Calu3 (cell line): ENCODE measurements at regions of chr10 and their contacts with region 1.

Region 1: GRCh38 chr10:4849555-4850242 is 23.7 kb downstream of the AKR1E2 start:
- DNase-seq: peak; percentile 94
- H3K4me3 Mint-ChIP-seq: no peak overlapping the region
- H3K27ac Mint-ChIP-seq: peak overlapping the region; percentile 72
- H3K4me1 Mint-ChIP-seq: peaks cover 61% of the 10 kb centered on the region
- H3K27me3 Mint-ChIP-seq: no peaks in the 10 kb centered on the region
- CTCF ChIP-seq: peak; percentile 98

Region 2: GRCh38 chr10:4512671-4513240 is 336.9 kb before region 1 on chr10:
- CTCF ChIA-PET with region 1: no interaction called
- intact Hi-C with region 1: no loop called
- DNase-seq: peak; percentile 59
- H3K4me3 Mint-ChIP-seq: no peak overlapping the region
- H3K27ac Mint-ChIP-seq: no peak overlapping the region
- H3K4me1 Mint-ChIP-seq: peaks cover 24% of the 10 kb centered on the region
- H3K27me3 Mint-ChIP-seq: no peaks in the 10 kb centered on the region
- CTCF ChIP-seq: peak; percentile 62

Region 3: DNA sequence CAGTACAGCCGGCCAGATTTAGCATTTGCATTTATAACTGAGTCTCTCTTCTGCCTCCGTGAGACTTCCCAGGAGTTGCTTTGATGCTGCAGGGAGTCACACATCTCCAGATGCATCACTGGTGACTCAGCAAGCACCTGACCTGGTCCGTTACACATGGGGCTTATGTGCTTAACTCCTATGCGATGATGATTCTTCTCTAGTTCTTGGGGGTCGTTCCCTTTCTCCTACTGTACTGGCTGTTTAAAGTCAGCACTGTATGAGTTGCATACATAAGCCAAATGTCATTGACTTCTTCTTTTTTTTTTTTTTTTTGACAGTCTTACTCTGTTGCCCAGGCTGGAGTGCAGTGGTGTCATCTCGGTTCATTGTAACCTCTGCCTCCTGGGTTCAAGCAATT is 36.7 kb before region 1 on chr10:
- CTCF ChIA-PET with region 1: interaction called, 16 read pairs
- intact Hi-C with region 1: loop called (anchors 1 kb)
- DNase-seq: peak; percentile 21
- H3K4me3 Mint-ChIP-seq: no peak overlapping the region
- H3K27ac Mint-ChIP-seq: no peak overlapping the region
- H3K4me1 Mint-ChIP-seq: peaks cover 34% of the 10 kb centered on the region
- H3K27me3 Mint-ChIP-seq: no peaks in the 10 kb centered on the region
- CTCF ChIP-seq: no peak

Region 4: DNA sequence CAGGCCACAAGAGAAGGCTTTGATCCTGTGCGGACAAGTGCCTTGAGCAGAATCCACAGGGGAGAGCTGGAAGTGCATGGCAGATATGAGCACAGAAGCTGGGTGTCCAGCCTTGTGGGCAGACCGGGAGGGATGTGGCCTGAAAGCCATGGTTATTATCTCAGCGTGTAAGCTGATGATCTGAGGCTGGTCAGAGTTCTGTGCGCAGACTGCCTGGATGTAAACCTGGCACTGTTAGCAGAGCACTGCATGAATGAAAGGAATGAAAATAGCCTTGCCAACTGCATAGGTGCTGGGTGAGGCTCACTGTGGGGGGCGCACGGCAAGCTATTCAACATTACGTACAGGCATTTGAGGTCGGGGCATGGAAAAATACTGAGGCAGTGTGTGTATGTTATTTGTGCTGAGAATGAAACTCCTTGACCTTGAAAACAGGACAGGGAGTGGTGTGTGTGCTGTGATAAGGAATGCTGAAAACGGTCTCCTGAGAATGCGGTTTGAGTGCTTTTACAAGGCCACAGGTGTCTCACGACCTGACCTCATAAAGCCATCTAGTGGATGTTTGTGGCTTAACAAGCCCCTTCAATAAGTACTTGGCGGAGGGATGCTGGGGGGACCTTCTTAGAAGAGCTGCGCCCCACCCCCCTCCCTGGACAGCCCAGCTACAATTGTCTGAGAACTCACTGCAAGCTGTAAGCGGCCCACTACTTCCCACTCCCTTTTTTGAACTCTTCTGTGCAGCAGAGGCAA is 132.2 kb after region 1 on chr10:
- CTCF ChIA-PET with region 1: interaction called, 19 read pairs
- intact Hi-C with region 1: loop called (anchors 1 kb)
- DNase-seq: peak; percentile 43
- H3K4me3 Mint-ChIP-seq: peak overlapping the region; percentile 43
- H3K27ac Mint-ChIP-seq: peak overlapping the region; percentile 19
- H3K4me1 Mint-ChIP-seq: peaks cover 24% of the 10 kb centered on the region
- H3K27me3 Mint-ChIP-seq: no peaks in the 10 kb centered on the region
- CTCF ChIP-seq: peak; percentile 61

Region 5: DNA sequence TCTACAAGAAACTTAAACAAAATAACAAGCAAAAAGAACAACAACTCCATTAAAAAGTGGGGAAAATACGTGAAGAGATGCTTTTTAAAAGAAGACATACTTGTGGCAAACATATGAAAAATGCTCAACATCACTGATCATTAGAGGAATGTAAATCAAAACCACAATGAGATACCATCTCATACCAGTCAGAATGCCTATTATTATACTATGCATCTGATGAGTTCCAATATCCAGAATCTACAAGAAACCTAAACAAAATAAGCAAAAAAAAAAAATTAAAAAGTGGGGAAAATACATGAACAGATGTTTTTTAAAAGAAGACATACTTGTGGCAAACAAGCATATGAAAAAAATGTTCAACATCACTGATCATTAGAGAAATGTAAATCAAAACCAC is 215.0 kb after region 1 on chr10:
- CTCF ChIA-PET with region 1: no interaction called
- intact Hi-C with region 1: no loop called
- DNase-seq: no peak
- H3K4me3 Mint-ChIP-seq: no peak overlapping the region
- H3K27ac Mint-ChIP-seq: no peak overlapping the region
- H3K4me1 Mint-ChIP-seq: peaks cover 2% of the 10 kb centered on the region
- H3K27me3 Mint-ChIP-seq: no peaks in the 10 kb centered on the region
- CTCF ChIP-seq: no peak

Region 6: GRCh38 chr10:5283305-5284158 is 433.8 kb after region 1 on chr10:
- CTCF ChIA-PET with region 1: interaction called, 4 read pairs
- intact Hi-C with region 1: loop called (anchors 1 kb)
- DNase-seq: peak; percentile 83
- H3K4me3 Mint-ChIP-seq: peak overlapping the region; percentile 56
- H3K27ac Mint-ChIP-seq: peak overlapping the region; percentile 64
- H3K4me1 Mint-ChIP-seq: peaks cover 33% of the 10 kb centered on the region
- H3K27me3 Mint-ChIP-seq: no peaks in the 10 kb centered on the region
- CTCF ChIP-seq: peak; percentile 76

Region 7: GRCh38 chr10:5385224-5385623 is 535.5 kb after region 1 on chr10:
- CTCF ChIA-PET with region 1: interaction called, 4 read pairs
- intact Hi-C with region 1: loop called (anchors 2 kb)
- DNase-seq: no peak
- H3K4me3 Mint-ChIP-seq: no peak overlapping the region
- H3K27ac Mint-ChIP-seq: no peak overlapping the region
- H3K4me1 Mint-ChIP-seq: no peaks in the 10 kb centered on the region
- H3K27me3 Mint-ChIP-seq: no peaks in the 10 kb centered on the region
- CTCF ChIP-seq: no peak

Region 8: GRCh38 chr10:5396556-5397300 is 547.0 kb after region 1 on chr10:
- CTCF ChIA-PET with region 1: no interaction called
- intact Hi-C with region 1: no loop called
- DNase-seq: no peak
- H3K4me3 Mint-ChIP-seq: no peak overlapping the region
- H3K27ac Mint-ChIP-seq: no peak overlapping the region
- H3K4me1 Mint-ChIP-seq: no peaks in the 10 kb centered on the region
- H3K27me3 Mint-ChIP-seq: no peaks in the 10 kb centered on the region
- CTCF ChIP-seq: no peak

Region 9: GRCh38 chr10:5434017-5434753 is 584.5 kb after region 1 on chr10:
- CTCF ChIA-PET with region 1: interaction called, 16 read pairs
- intact Hi-C with region 1: loop called (anchors 1 kb)
- DNase-seq: peak; percentile 41
- H3K4me3 Mint-ChIP-seq: no peak overlapping the region
- H3K27ac Mint-ChIP-seq: peak overlapping the region; percentile 22
- H3K4me1 Mint-ChIP-seq: peaks cover 27% of the 10 kb centered on the region
- H3K27me3 Mint-ChIP-seq: no peaks in the 10 kb centered on the region
- CTCF ChIP-seq: no peak

Region 10: DNA sequence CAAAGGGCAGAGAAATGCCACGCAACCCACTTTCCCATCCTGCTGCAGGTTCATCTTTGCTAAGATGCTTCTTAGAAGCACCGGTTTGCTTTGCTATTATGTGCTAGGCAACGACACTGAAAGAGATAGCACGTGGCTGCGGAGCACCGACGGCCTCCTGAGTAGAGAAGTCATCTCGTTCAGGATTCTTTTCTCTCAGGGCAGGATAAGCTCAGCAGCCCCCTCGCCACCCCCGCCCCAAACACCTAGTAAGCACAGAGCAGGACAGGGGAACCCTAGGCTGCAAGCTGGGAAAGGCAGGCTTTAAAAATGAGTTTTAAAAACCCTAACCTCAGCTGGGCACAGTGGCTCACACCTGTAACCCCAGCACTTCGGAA is 801.7 kb after region 1 on chr10:
- CTCF ChIA-PET with region 1: interaction called, 15 read pairs
- intact Hi-C with region 1: no loop called
- DNase-seq: no peak
- H3K4me3 Mint-ChIP-seq: no peak overlapping the region
- H3K27ac Mint-ChIP-seq: no peak overlapping the region
- H3K4me1 Mint-ChIP-seq: no peaks in the 10 kb centered on the region
- H3K27me3 Mint-ChIP-seq: no peaks in the 10 kb centered on the region
- CTCF ChIP-seq: no peak